GM23248 (cell line): ENCODE measurements at regions of chr19 and their contacts with region 1.

Region 1: GRCh38 chr19:5048091-5048726 is 79.3 kb downstream of the KDM4B start:
- DNase-seq: peak; percentile 92
- H3K4me3 ChIP-seq: peak overlapping the region; percentile 49
- H3K27ac ChIP-seq: peak overlapping the region; percentile 78
- H3K4me1 ChIP-seq: peaks cover 33% of the 10 kb centered on the region
- H3K27me3 ChIP-seq: no peaks in the 10 kb centered on the region

Region 2: DNA sequence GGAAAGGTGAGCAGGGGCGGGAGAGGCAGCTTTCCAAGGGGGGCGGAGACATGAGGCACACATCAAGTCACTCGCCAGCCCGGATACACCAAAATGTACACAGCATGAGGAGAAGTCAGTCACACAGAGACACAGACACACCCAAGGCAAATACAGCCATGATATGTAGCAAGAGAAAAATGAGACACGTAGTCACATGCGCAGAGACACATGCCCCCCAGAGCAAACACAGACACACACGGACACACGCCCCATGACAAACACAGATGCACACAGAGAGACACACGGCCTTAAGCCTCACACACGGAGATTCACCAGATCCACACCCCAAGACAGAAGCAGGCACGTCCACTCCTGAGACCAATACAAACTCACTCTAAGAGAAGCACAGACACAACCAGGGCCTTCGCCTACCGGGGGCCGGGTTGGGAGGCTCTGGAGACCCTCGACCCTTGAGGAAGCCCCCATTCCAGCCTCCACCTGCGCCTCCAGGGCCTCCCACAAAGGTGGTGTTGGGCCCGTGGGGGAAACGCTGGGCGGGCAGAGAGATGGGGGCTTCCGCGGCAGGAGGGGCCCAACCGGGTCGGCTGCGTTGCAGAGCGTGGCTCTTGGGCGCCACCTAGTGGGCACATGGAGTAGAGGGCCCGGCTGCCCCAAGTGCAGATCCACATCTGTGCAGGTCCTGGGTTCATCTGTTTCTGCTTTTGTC is 529.7 kb after region 1 on chr19:
- in situ Hi-C with region 1: loop called (anchors 10 kb)
- DNase-seq: peak; percentile 71
- H3K4me3 ChIP-seq: peak overlapping the region; percentile 25; the same call in 1 of the 2 replicates
- H3K27ac ChIP-seq: no peak overlapping the region
- H3K4me1 ChIP-seq: no peaks in the 10 kb centered on the region
- H3K27me3 ChIP-seq: no peaks in the 10 kb centered on the region